ENCODE measurements at regions of chr10 and their contacts with region 1.

Region 1: GRCh38 chr10:122461367-122461728 is at the start of gene HTRA1:
- DNase-seq: peak; percentile 40 to 92 (median 84)
- H3K4me3 ChIP-seq: peak within 1 kb of the TSS; percentile 49 to 94 (median 84)
- H3K27ac ChIP-seq: peak within 1 kb of the TSS; percentile 74 to 98 (median 92)
- H3K27me3 ChIP-seq: no peaks in the 10 kb centered on the region
- CTCF ChIP-seq: no peak
- total RNA-seq, gene HTRA1: 154 to 492 (median 263) TPM

Region 2: GRCh38 chr10:122504610-122504950 is 43.2 kb after region 1 on chr10:
- intact Hi-C with region 1: loop called (anchors 5 kb)
- DNase-seq: peak; percentile 38 to 97 (median 94)
- H3K4me3 ChIP-seq: peak overlapping the region in 2 of 59 donors; percentile 3 to 11
- H3K27ac ChIP-seq: peak overlapping the region; percentile 64 to 99 (median 90)
- H3K27me3 ChIP-seq: no peaks in the 10 kb centered on the region
- CTCF ChIP-seq: peak in 14 of 56 donors; percentile 6 to 34 (median 20)

Region 3: DNA sequence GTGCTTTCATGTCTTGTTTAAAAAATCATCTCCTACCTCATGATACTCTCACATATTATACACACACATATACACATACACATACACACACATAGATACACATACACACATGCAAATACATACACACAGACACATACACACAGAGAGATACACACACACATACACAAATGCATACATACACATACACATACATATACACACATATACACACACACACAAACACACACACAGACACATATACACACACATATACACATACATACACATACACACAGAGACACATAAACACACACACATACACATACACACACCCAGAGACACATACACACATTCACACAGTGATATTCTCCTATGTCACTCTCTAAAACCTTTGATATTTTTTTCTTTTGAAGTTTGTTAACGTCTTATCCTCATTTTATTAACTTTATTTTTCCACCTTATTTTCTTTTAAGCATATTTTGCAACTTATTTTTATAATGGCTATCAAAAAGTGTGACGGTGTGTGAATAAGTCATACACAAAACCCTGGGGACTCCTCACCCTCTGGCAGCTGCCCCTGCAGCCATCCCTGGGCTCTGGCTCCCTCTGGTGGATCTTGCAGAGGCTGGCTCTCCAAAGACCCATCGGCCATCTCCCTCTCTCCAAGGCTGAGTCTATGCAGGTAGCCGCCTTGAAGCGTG is 242.2 kb after region 1 on chr10:
- intact Hi-C with region 1: loop called in 1 of 2 experiments (anchors 10 kb)
- DNase-seq: peak; percentile 30 to 88 (median 76)
- H3K4me3 ChIP-seq: no peak overlapping the region
- H3K27ac ChIP-seq: peak overlapping the region in 2 of 59 donors; percentile 57 to 75
- H3K27me3 ChIP-seq: peaks cover 0 to 4% (median 0%) of the 10 kb centered on the region in 45 donors
- CTCF ChIP-seq: peak in 55 of 56 donors; percentile 26 to 97 (median 89)

Measured in dorsolateral prefrontal cortex (tissue), 120 donors.